Prostate gland (tissue), 2 donors: ENCODE measurements at regions of chr16 and their contacts with region 1.

Region 1: DNA sequence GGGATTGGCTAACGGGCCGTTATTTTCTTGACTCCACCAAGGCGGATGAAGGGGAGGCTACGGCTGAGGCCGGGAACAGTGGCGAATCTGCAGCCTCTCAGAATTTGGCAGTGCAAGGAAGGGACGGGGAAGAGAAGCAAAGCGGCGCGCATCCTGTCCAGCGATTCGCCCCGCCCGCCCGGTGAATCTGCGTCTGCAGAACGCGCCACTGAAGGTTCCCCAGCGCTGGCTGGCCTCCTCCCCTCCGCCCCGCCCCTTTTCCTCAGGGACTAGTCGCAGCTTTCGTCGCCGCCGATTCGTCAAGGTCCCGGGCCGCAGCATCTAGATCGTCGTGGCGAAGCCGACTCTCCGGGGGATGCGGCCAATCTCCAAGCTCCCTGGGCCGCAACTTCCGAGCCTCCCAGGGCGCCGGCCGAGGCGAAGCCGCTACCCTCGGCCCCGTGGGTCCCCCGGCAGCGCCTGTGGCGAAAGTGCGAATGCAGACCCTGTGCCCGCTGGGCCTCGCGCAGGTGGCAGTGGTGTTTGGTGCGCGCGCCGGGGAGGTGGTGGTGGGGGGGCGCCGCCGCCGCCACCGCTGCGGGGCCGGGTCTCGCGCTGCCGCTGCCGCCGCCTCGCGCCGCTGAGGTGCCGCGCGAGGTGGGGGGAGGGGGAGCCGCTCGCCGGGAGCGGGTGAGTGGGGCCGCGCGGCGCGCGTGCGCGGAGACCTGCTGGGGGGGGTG is at the start of gene SETD1A:
- DNase-seq: peak; percentile 95
- H3K4me3 ChIP-seq: peak within 1 kb of the TSS; percentile 79 to 86
- H3K27ac ChIP-seq: peak within 1 kb of the TSS; percentile 94 to 97
- H3K4me1 ChIP-seq: peaks cover 11% of the 10 kb centered on the region
- H3K27me3 ChIP-seq: no peaks in the 10 kb centered on the region
- CTCF ChIP-seq: peak in 2 of 4 experiments; percentile 4 to 31
- POLR2A ChIP-seq: peak; percentile 21
- total RNA-seq, gene SETD1A: 10.0 to 29.1 TPM

Region 2: DNA sequence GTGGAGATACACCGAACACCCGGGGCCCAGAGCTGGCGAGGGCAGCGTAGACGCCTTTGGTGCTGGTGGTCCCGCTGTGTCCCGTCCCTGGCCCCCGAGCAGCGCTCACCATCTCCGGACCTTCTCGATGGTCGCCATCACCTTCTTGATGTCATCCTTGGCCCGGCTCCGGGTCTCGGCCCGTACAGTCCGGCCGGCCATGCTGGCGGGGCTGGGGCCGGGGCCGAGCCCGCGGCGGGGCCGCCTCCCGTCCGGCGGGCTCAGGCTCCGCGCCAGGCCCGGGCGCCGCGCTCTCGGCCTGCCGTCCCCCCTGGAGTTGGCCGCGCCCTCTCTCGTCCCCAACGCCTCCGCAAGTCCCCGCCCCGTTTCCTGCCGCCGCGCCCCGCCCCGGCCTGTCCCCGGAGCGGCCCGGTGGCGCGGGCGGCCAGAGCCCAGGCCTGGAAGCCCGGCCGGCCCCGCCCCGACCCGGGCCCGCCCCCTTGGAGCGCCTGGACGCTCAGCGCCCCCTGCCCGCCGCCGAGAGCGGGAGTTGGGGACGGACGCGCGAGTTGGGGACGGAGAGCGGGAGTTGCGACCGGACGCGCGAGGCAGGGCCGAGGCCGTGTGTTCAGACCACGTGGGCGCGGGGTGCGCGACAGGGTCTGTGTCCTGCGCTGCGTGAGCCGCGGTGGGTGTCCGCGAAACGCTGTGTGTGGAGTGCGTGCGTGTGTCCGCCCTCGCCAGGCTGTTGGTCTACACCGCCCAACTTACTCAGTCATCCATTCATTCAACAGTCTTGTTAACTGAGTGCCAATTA is 63.7 kb before region 1 on chr16 and contains the start of gene BCL7C:
- intact Hi-C with region 1: no loop called
- DNase-seq: peak; percentile 89
- H3K4me3 ChIP-seq: peak within 1 kb of the TSS; percentile 73 to 84
- H3K27ac ChIP-seq: peak within 1 kb of the TSS; percentile 99 to 100
- H3K4me1 ChIP-seq: peaks cover 15% of the 10 kb centered on the region
- H3K27me3 ChIP-seq: no peaks in the 10 kb centered on the region
- CTCF ChIP-seq: peak in 3 of 4 experiments; percentile 37 to 73 (median 64)
- POLR2A ChIP-seq: peak; percentile 36
- total RNA-seq, gene BCL7C: 54.2 to 54.8 TPM

Region 3: GRCh38 chr16:31713071-31713944 is 755.7 kb after region 1 on chr16:
- intact Hi-C with region 1: loop called (anchors 10 kb)
- DNase-seq: peak; percentile 92
- H3K4me3 ChIP-seq: peak overlapping the region; percentile 72 to 85
- H3K27ac ChIP-seq: peak overlapping the region; percentile 83 to 89
- H3K4me1 ChIP-seq: no peaks in the 10 kb centered on the region
- H3K27me3 ChIP-seq: no peaks in the 10 kb centered on the region
- CTCF ChIP-seq: no peak
- POLR2A ChIP-seq: peak; percentile 78